Activated naive CD4-positive, alpha-beta T cell treated with anti-CD3 and anti-CD28 coated beads for 36 hours (primary cell): ENCODE measurements at regions of chr11 and their contacts with region 1.

Region 1: DNA sequence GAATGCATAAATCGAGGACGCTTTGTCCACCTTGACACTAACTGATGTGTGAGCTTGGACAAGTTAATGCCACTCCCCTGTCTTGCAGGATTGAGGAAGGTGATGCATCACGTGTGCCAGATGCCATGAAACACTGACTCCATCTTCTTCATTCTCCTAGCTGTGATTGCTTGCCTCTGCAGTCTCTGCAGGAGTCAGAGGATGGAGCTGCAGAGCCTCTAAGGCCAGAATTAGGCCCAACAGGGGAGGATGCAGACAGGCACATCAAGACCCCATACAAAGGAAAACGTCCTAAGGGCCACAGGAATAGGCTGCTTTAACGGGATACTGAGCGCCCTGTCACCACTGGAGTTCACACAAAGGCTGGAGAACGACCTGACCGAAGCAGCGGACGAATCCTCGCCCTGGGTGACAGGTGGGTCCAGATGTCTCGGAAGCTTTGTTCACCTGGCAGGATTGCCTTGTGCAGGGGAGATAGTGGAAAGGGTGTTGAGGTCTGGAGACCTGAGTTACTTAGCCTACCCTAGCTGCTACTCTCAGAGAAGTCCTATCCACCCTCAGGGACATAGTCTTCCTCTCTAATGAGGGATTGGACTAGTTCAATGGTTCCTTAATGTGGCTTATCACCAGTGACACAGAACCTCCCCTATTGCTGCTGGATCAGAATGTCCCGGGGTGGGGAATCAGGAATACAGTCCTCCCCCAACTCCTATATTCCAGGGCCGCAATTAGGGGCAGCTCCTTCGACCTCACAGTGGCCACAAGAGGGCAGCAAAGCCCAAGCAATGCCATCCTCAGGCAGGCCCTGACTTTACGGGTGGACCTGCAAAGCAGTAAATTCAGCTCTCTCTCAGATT is 32.4 kb downstream of the DBX1 start:
- DNase-seq: peak; percentile 87
- H3K4me3 Mint-ChIP-seq: no peak overlapping the region
- H3K27ac Mint-ChIP-seq: no peak overlapping the region
- H3K4me1 Mint-ChIP-seq: peaks cover 11% of the 10 kb centered on the region
- H3K27me3 Mint-ChIP-seq: peaks cover 13% of the 10 kb centered on the region

Region 2: GRCh38 chr11:19903620-19904069 is 224.3 kb before region 1 on chr11:
- CTCF ChIA-PET with region 1: interaction called, 4 read pairs
- intact Hi-C with region 1: loop called (anchors 1 kb)
- DNase-seq: peak; percentile 76
- H3K4me3 Mint-ChIP-seq: no peak overlapping the region
- H3K27ac Mint-ChIP-seq: no peak overlapping the region
- H3K4me1 Mint-ChIP-seq: no peaks in the 10 kb centered on the region
- H3K27me3 Mint-ChIP-seq: no peaks in the 10 kb centered on the region

Region 3: GRCh38 chr11:19951558-19952115 is 176.3 kb before region 1 on chr11:
- CTCF ChIA-PET with region 1: interaction called, 12 read pairs
- intact Hi-C with region 1: loop called (anchors 1 kb)
- DNase-seq: no peak
- H3K4me3 Mint-ChIP-seq: peak overlapping the region; percentile 19
- H3K27ac Mint-ChIP-seq: no peak overlapping the region
- H3K4me1 Mint-ChIP-seq: peaks cover 5% of the 10 kb centered on the region
- H3K27me3 Mint-ChIP-seq: peaks cover 2% of the 10 kb centered on the region

Region 4: DNA sequence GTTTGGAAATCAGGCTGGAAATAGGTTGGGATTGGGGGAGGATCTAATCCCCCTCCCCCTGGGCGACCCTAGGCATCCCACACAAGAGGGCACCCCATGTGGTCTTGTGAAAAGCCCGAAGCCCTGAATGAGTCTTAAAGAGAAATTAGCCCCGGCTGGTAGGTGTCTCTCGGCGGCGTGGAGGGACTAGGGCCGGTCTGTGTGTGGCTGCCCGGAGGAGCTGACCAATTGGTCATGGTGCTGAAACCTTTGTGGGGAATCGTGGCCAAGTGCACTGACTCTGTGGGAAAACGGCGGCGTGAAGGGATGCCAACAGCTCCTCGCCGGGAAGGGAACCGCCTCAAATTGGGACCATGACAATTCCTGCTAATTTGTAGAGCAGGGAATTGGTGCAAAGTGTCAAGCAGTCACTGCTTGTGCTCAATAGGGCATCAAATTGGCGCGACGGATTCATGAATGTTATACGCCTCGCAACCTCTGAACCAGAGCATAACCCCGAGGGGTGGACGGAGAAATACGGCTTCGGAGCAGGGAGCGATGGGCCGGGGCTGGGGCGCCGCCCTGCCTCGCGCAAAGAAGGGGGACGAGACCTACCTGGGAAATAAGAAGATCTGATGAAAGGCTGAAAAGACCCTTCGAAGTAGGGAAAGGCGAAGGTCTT is 30.8 kb after region 1 on chr11:
- CTCF ChIA-PET with region 1: interaction called, 9 read pairs
- intact Hi-C with region 1: loop called (anchors 2 kb)
- DNase-seq: peak; percentile 45
- H3K4me3 Mint-ChIP-seq: no peak overlapping the region
- H3K27ac Mint-ChIP-seq: no peak overlapping the region
- H3K4me1 Mint-ChIP-seq: peaks cover 47% of the 10 kb centered on the region
- H3K27me3 Mint-ChIP-seq: peaks cover 69% of the 10 kb centered on the region

Region 5: GRCh38 chr11:20355221-20356219 is 227.6 kb after region 1 on chr11:
- CTCF ChIA-PET with region 1: interaction called, 155 read pairs
- intact Hi-C with region 1: loop called (anchors 1 kb)
- DNase-seq: peak; percentile 56
- H3K4me3 Mint-ChIP-seq: no peak overlapping the region
- H3K27ac Mint-ChIP-seq: no peak overlapping the region
- H3K4me1 Mint-ChIP-seq: peaks cover 9% of the 10 kb centered on the region
- H3K27me3 Mint-ChIP-seq: no peaks in the 10 kb centered on the region

Region 6: DNA sequence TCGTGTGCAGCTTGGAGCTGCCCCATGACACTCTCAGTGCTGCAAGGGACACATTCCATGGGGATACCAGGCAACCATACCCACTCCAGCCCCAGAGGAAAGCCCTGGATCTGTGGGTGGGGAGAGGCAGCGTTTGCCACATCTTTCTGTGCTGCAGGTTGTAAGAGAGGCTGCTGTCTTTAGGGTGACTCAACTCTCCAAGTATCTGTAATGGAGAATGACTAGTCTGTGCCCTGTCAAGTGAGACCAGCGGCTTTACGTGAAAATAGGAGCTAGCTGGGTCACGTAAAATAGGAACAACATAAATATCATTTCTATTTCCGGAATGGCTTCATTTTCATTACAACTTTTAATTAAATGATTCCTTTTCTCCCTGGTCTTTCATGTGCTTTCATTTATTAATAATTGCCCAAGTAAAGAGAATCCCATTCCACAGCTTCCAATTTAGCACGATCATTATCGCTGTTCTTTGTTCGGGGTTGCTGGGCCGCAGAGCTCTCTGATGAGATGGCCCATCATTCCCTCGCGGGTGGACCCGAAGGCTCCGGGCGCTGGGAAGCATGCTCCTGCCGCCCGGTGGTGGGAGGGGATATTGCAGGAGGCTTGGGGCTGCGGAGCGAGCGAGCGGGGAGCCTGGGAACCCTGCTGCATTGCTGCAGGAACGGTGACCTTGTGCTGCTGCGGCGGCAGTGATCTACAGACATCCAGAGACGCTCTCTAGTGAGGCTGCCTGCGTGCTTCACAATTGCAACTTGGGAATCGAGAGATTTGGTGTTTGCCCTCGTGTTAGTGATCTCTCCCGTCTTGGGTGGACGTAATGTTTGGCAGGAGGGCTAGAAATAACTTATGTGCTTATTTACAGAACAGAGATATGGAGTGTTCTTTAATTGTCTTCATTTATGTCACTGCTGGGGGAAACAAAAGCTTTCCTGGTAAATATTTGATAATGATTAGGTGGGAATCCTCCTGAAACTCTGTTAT is 482.1 kb after region 1 on chr11:
- CTCF ChIA-PET with region 1: interaction called, 8 read pairs
- intact Hi-C with region 1: loop called (anchors 1 kb)
- DNase-seq: peak; percentile 77
- H3K4me3 Mint-ChIP-seq: peak overlapping the region; percentile 28
- H3K27ac Mint-ChIP-seq: no peak overlapping the region
- H3K4me1 Mint-ChIP-seq: peaks cover 7% of the 10 kb centered on the region
- H3K27me3 Mint-ChIP-seq: peaks cover 72% of the 10 kb centered on the region

Region 7: DNA sequence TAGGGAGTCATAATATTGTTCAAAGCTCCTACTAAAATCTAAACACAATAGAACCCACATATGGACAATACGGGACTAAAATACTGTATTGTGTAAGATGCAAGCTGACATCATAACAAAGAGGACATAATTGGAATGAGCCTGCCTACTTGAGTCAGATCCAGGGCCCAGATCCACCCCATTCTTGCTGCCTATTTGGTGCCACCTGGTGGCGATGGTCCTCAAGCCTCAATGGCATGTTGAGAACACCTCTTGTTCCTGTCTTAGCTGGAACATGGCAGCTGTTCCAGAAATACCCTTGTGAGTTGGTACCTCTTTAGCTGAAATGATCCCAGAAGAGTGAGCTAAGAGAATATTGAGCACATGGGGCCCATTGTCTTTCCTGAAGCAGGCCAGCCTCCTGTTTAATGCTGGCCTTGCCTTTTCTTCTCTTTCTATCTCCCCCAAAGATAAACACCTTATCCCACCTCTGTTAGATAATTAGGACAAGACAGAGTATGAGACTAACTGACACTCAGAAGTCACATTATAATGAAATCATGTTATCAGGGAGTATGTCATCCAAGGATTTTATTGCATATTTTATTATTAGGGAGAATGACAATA is 1384.0 kb after region 1 on chr11:
- CTCF ChIA-PET with region 1: no interaction called
- intact Hi-C with region 1: loop called (anchors 5 kb)
- DNase-seq: peak; percentile 59
- H3K4me3 Mint-ChIP-seq: no peak overlapping the region
- H3K27ac Mint-ChIP-seq: no peak overlapping the region
- H3K4me1 Mint-ChIP-seq: no peaks in the 10 kb centered on the region
- H3K27me3 Mint-ChIP-seq: no peaks in the 10 kb centered on the region